ENCODE measurements at regions of chr5 and their contacts with region 1.

Region 1: GRCh38 chr5:119367502-119368237 is 11.9 kb downstream of the TNFAIP8 start:
- DNase-seq: no peak
- H3K4me3 Mint-ChIP-seq: peak overlapping the region; percentile 60
- H3K27ac Mint-ChIP-seq: peak overlapping the region; percentile 98
- H3K4me1 Mint-ChIP-seq: peaks cover 87% of the 10 kb centered on the region
- H3K27me3 Mint-ChIP-seq: no peaks in the 10 kb centered on the region

Region 2: DNA sequence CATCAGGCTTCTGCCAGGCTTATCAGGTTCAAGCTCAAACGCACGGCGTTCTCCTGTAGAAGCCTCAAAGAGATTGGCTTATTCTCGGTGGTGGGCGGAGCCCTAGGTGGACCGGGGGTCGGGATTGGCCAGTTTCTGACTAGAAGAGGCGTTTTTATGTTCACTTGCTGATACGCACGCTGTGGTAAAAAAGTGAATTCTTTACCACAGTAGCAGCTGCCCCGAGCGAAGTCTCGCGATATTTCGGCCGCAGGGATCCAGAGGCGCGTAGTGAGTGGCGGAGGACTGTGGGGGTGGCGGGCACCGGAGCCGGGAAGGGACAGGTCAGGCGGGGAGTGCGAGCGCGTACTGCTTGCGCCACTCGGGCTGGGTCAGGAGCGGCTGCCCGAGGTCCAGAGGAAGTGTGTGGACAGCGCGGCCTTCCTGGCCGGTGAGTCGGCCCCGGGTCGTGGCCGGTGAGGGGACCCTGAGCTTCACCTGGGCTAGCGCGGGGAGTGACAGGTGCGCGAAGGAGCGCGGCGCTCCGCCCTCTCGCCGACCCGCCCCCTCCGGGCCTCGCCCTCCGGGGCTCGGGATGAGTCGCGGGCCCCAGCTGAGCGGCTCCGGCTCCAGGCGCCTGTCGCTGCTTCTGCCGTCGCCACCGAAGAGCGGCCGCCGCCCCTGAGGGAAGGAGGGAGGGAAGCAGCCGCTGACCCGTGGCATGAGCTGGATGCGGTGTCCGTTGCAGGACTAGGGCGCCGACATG is 296.7 kb before region 1 on chr5 and contains the start of gene DMXL1:
- CTCF ChIA-PET with region 1: no interaction called
- intact Hi-C with region 1: loop called (anchors 2 kb)
- DNase-seq: peak; percentile 100
- H3K4me3 Mint-ChIP-seq: peak within 1 kb of the TSS; percentile 95
- H3K27ac Mint-ChIP-seq: peak within 1 kb of the TSS; percentile 97
- H3K4me1 Mint-ChIP-seq: peaks cover 38% of the 10 kb centered on the region
- H3K27me3 Mint-ChIP-seq: peaks cover 2% of the 10 kb centered on the region
- total RNA-seq, gene DMXL1: 16.4 to 18.0 TPM

Region 3: DNA sequence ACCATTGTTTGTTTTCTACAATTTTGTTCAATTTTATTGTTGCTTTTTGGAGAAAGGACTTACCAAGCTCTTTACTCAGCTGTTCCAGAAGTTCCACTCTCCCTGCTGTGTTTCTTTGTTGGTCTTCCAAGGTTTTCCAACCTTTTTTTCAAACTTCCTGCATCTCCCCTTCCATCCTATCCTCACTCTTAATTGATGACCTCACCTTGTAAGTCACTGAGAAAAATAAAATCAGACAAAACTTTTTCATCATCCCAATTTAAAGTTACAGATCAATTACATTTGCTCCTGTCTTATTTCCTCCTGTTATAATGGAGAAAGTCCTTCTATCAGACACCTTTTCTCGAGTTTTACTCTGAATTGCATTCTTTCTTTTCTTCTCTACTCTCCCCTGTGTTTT is 175.7 kb before region 1 on chr5:
- CTCF ChIA-PET with region 1: no interaction called
- intact Hi-C with region 1: no loop called
- DNase-seq: no peak
- H3K4me3 Mint-ChIP-seq: no peak overlapping the region
- H3K27ac Mint-ChIP-seq: no peak overlapping the region
- H3K4me1 Mint-ChIP-seq: peaks cover 11% of the 10 kb centered on the region
- H3K27me3 Mint-ChIP-seq: no peaks in the 10 kb centered on the region

Region 4: GRCh38 chr5:119264186-119264585 is 103.5 kb before region 1 on chr5:
- CTCF ChIA-PET with region 1: no interaction called
- intact Hi-C with region 1: no loop called
- DNase-seq: no peak
- H3K4me3 Mint-ChIP-seq: no peak overlapping the region
- H3K27ac Mint-ChIP-seq: no peak overlapping the region
- H3K4me1 Mint-ChIP-seq: peaks cover 42% of the 10 kb centered on the region
- H3K27me3 Mint-ChIP-seq: no peaks in the 10 kb centered on the region

Region 5: DNA sequence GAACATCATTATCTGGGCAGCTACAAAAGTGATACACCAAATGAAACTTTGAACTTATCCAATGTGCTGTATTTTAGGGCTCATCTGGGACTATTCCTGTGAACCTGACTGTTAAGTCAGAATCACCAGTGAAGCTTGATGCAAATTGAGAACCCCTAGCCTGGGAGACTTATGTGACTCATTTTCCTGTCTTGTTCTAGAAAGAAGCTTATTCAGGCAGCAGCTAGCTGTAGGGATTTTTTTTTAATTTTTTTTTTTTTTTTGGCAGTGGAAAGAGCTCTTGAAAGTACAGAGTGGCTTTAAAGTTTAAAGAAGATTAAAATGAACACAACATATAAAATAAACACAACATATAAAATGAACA is 92.9 kb before region 1 on chr5:
- CTCF ChIA-PET with region 1: interaction called, 4 read pairs
- intact Hi-C with region 1: loop called (anchors 1 kb)
- DNase-seq: peak; percentile 50
- H3K4me3 Mint-ChIP-seq: peak overlapping the region; percentile 72
- H3K27ac Mint-ChIP-seq: peak overlapping the region; percentile 97
- H3K4me1 Mint-ChIP-seq: peaks cover 88% of the 10 kb centered on the region
- H3K27me3 Mint-ChIP-seq: no peaks in the 10 kb centered on the region

Region 6: GRCh38 chr5:119315516-119315949 is 52.1 kb before region 1 on chr5:
- CTCF ChIA-PET with region 1: interaction called, 6 read pairs
- intact Hi-C with region 1: loop called (anchors 1 kb)
- DNase-seq: peak; percentile 83
- H3K4me3 Mint-ChIP-seq: peak overlapping the region; percentile 36
- H3K27ac Mint-ChIP-seq: peak overlapping the region; percentile 96
- H3K4me1 Mint-ChIP-seq: peaks cover 94% of the 10 kb centered on the region
- H3K27me3 Mint-ChIP-seq: no peaks in the 10 kb centered on the region

Region 7: DNA sequence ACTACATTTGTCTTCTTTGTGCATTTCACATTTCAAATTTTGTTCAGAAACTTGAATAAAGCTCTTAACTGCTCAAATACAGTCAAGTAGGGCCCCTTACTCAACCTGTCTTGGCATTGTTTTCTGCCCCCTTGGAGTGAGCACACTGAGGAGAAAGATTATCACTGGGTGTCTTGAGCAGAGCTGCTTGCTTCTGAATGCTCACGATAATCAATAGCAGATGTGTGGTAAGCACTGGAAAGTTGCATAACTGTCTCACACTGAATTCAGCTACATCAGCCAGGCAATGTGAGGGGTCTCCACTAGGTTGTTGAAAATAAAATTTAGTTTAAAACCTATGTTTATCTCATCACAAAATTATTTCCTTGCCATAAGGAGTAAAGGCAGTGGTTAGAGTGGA is 19.7 kb before region 1 on chr5:
- CTCF ChIA-PET with region 1: interaction called, 3 read pairs
- intact Hi-C with region 1: loop called (anchors 1 kb)
- DNase-seq: no peak
- H3K4me3 Mint-ChIP-seq: no peak overlapping the region
- H3K27ac Mint-ChIP-seq: peak overlapping the region; percentile 88
- H3K4me1 Mint-ChIP-seq: peaks cover 86% of the 10 kb centered on the region
- H3K27me3 Mint-ChIP-seq: no peaks in the 10 kb centered on the region

Region 8: DNA sequence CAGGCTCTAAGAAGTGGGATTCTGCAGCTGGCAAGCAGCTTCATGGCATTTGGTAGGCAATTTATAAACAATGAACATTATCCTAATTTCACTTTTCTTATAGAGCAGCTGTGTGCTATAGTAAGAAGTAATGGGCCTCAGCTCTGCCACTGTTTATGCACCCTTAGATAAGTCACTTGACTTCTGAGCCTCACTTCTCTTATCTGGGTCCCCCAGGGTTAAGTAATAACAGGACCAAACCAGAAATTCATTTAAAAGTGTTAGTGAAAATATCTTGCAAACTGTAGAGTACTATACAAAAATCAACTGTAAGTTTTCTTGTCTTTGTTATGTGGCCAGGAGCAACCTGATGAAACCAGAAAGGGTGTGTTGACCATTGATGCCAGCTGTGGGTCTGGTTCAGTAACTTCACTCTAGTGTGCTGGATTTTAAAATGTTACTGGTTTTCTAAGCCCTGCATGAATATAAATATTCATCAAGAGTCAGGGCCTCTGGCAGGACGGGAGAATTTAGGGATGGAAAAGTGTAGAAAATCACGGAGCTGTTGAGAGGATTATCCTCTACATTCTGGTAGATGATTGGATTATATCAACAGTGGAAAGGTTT is 12.4 kb after region 1 on chr5:
- CTCF ChIA-PET with region 1: interaction called, 5 read pairs
- intact Hi-C with region 1: loop called (anchors 1 kb)
- DNase-seq: no peak
- H3K4me3 Mint-ChIP-seq: no peak overlapping the region
- H3K27ac Mint-ChIP-seq: peak overlapping the region; percentile 83
- H3K4me1 Mint-ChIP-seq: peaks cover 85% of the 10 kb centered on the region
- H3K27me3 Mint-ChIP-seq: no peaks in the 10 kb centered on the region

Region 9: DNA sequence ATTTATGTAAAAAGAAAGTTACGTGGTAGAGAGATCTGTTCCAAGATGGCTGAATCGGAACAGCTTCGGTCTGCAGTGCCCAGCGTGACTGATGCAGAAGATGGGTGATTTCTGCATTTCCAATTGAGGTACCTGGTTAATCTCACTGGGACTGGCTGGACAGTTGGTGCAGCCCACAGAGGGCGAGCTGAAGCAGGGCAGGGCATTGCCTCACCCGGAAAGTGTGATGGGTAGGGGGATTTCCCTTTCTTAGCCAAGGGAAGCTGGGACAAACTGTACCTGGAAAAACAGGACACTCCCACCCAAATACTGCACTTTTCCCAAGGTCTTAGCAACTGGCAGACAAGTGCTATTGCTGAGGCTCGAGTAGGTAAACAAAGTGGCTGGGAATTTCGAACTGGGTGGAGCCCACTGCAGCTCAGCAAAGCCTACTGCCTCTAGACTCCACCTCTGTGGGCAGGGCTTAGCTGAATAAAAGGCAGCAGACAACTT is 71.5 kb after region 1 on chr5:
- CTCF ChIA-PET with region 1: no interaction called
- intact Hi-C with region 1: no loop called
- DNase-seq: peak; percentile 17
- H3K4me3 Mint-ChIP-seq: peak overlapping the region; percentile 75
- H3K27ac Mint-ChIP-seq: peak overlapping the region; percentile 56
- H3K4me1 Mint-ChIP-seq: peaks cover 6% of the 10 kb centered on the region
- H3K27me3 Mint-ChIP-seq: peaks cover 7% of the 10 kb centered on the region

Region 10: GRCh38 chr5:119996968-119997367 is 629.3 kb after region 1 on chr5:
- CTCF ChIA-PET with region 1: no interaction called
- intact Hi-C with region 1: no loop called
- DNase-seq: no peak
- H3K4me3 Mint-ChIP-seq: no peak overlapping the region
- H3K27ac Mint-ChIP-seq: no peak overlapping the region
- H3K4me1 Mint-ChIP-seq: no peaks in the 10 kb centered on the region
- H3K27me3 Mint-ChIP-seq: no peaks in the 10 kb centered on the region